ENCODE measurements at regions of chr17 and their contacts with region 1.

Region 1: DNA sequence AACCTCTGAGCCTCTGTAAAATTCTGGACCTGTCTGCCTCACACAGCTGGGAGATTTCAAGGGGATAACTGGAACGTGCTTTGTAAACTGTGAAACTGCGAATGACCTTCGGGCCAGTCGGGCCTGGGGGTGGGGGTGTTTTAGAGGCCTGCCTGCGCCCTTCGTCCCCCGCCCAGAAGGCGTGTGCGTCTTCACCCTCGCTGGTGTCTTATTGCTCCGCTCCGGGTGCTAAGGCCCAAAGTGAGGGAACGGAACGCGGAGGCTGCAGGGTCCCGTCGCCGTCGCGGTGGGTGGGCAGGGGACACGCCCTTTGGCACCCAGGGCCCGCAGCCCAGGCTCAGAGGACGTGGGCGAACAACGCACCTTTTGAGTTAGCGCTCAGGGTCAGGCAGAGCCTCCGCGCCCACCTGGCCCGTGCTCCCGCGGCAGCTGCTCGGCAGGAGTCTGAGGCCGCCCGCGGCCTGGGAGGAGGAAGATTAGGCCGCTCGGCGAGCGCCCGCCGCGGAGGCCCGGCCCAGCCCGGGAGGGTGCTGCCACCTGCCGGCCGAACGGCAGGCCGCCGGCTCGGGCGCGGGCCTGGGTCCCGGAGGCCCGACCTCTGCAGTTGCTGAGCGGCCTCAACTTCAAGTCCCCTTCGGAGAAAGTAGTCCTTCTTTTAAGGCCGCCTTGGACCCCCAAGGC is 29.7 kb downstream of the DCAKD start:
- DNase-seq: peak; percentile 94
- H3K4me3 ChIP-seq: peak overlapping the region in 7 of 8 donors; percentile 11 to 60 (median 32)
- H3K27ac ChIP-seq: peak overlapping the region in 3 of 8 donors; percentile 36 to 48 (median 39)
- H3K4me1 ChIP-seq: peaks cover 14 to 49% (median 38%) of the 10 kb centered on the region in 6 donors
- H3K27me3 ChIP-seq: peaks cover 0 to 54% (median 32%) of the 10 kb centered on the region in 7 donors
- CTCF ChIP-seq: peak; percentile 25 to 98 (median 92)
- POLR2A ChIP-seq: no peak

Region 2: GRCh38 chr17:44775136-44775837 is 246.5 kb before region 1 on chr17:
- intact Hi-C with region 1: loop called (anchors 5 kb)
- DNase-seq: peak; percentile 99
- H3K4me3 ChIP-seq: peak overlapping the region; percentile 57 to 97 (median 70)
- H3K27ac ChIP-seq: peak overlapping the region in 5 of 8 donors; percentile 18 to 74 (median 57)
- H3K4me1 ChIP-seq: peaks cover 13 to 47% (median 32%) of the 10 kb centered on the region in 6 donors
- H3K27me3 ChIP-seq: peaks cover 0 to 74% (median 12%) of the 10 kb centered on the region in 7 donors
- CTCF ChIP-seq: peak in 3 of 11 experiments; percentile 1 to 21 (median 12)
- POLR2A ChIP-seq: no peak

Region 3: GRCh38 chr17:44919885-44920564 is 101.7 kb before region 1 on chr17:
- intact Hi-C with region 1: loop called (anchors 5 kb)
- DNase-seq: peak; percentile 89
- H3K4me3 ChIP-seq: no peak overlapping the region
- H3K27ac ChIP-seq: no peak overlapping the region
- H3K4me1 ChIP-seq: peaks cover 0 to 38% (median 13%) of the 10 kb centered on the region in 6 donors
- H3K27me3 ChIP-seq: peaks cover 0 to 38% (median 0%) of the 10 kb centered on the region in 7 donors
- CTCF ChIP-seq: peak; percentile 57 to 88 (median 78)
- POLR2A ChIP-seq: no peak

Region 4: DNA sequence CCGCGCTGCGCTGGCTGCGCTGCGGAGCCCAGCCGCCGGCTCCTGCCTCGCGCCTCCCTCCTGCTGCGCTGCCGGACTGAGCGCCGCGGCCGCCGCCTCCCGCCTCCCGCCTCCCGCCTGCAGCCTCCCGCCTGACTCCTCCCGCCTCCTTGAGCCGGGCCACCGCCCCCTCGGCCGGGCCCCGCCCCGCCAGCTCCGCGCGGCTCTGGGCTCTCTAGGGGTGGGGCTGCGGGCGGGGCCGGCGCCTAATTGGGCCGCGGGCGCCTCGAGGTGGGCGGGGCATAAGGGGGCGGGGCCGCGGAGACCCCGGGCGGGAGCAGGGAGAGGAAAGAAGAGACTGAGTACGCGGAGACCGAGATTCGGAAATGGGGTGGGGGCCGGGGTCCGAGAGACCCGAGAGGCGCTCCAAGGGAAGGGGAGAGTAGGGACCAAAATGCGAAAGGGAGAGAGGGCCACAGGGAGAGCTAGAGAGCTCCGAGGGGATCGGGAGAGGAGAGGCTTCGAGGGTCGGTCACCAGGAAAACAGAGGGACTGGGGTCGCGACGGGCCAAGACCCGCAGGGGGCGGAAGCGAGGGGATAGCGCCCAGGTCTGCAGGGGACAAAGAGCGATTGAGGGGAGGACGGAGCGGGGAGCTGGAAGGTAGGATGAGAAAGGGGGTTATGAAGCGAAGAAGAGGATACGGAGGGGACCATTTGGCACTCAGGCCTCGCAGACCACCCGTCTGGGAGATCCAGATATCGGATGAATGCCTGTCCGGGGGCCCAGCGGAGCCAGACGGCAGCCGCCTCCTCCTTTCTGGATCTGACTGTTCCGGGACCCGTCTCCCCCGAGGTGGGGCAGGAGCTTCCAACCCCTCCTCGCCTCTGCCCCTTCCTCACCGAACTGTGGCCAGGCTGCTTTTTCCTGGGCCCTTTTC is 53.3 kb before region 1 on chr17 and contains the start of gene C1QL1:
- intact Hi-C with region 1: loop called (anchors 5 kb)
- DNase-seq: peak; percentile 94
- H3K4me3 ChIP-seq: peak within 1 kb of the TSS; percentile 12 to 68 (median 39)
- H3K27ac ChIP-seq: no peak within 1 kb of the TSS
- H3K4me1 ChIP-seq: peaks cover 19 to 53% (median 38%) of the 10 kb centered on the region in 6 donors
- H3K27me3 ChIP-seq: peaks cover 4 to 100% (median 63%) of the 10 kb centered on the region in 7 donors
- CTCF ChIP-seq: peak in 1 of 11 experiments; percentile 12
- POLR2A ChIP-seq: no peak
- total RNA-seq, gene C1QL1: 0.20 TPM in 1 of 7 donors, not detected in the others

Measured in spleen (tissue), 13 donors.